ENCODE measurements at regions of chr19 and their contacts with region 1.

Region 1: GRCh38 chr19:43619262-43620060 is at the start of gene ZNF428:
- DNase-seq: peak; percentile 83
- ATAC-seq: peak; percentile 87
- H3K4me3 Mint-ChIP-seq: peak within 1 kb of the TSS; percentile 94
- H3K27ac Mint-ChIP-seq: peak within 1 kb of the TSS; percentile 96
- H3K4me1 Mint-ChIP-seq: peaks cover 21% of the 10 kb centered on the region
- H3K27me3 Mint-ChIP-seq: no peaks in the 10 kb centered on the region
- CTCF ChIP-seq: no peak
- total RNA-seq, gene ZNF428: 26.2 and 29.1 TPM in 2 replicates

Region 2: DNA sequence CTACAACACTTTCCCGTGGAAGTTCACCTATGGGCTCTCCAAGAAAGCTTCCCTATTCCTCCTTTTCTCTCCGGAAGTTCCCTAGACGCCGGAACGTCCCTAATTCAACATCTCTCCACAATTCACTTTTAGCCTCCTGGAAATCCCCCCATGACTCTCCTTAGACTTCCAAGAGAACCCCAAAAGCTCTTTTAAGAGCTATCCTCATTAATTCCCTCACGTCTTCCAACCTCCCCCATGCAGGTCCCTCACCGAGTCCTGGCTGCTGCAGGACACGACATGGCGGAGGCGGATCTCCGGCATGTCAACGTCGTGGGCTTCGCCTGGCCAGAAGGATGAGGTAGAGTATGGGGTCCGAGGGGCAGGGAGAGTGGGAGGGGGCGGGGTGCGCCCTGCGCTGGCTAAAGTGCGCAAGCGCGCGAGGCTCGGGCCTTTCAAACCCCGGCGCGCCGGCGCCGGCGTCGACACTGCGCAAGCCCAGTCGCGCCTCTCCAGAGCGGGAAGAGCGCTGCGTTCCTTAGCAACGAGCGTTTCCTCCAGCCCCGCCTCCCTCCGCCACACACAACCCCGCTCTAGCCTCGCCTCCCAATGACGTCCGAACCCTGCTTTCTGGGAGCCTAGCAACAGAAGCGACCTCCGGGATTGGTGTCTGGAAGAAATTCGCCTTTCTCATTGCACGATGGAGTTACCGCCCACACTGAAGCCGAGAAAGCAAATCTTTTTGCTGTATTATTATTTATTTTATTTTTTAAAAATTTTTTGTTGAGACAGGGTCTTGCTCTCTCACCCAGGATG is 44.1 kb before region 1 on chr19 and contains the starts of genes PINLYP and XRCC1:
- CTCF ChIA-PET with region 1: no interaction called
- POLR2A ChIA-PET with region 1: no interaction called
- intact Hi-C with region 1: loop called (anchors 1 kb)
- DNase-seq: peak; percentile 87
- ATAC-seq: peak; percentile 97
- H3K4me3 Mint-ChIP-seq: peak within 1 kb of the TSS; percentile 96
- H3K27ac Mint-ChIP-seq: peak within 1 kb of the TSS; percentile 92
- H3K4me1 Mint-ChIP-seq: peaks cover 44% of the 10 kb centered on the region
- H3K27me3 Mint-ChIP-seq: no peaks in the 10 kb centered on the region
- CTCF ChIP-seq: no peak
- total RNA-seq, gene PINLYP: 1.9 and 2.1 TPM in 2 replicates
- total RNA-seq, gene XRCC1: 31.9 and 34.5 TPM in 2 replicates

Region 3: GRCh38 chr19:43643326-43643725 is 23.9 kb after region 1 on chr19:
- CTCF ChIA-PET with region 1: no interaction called
- POLR2A ChIA-PET with region 1: no interaction called
- intact Hi-C with region 1: no loop called
- DNase-seq: no peak
- ATAC-seq: no peak
- H3K4me3 Mint-ChIP-seq: no peak overlapping the region
- H3K27ac Mint-ChIP-seq: no peak overlapping the region
- H3K4me1 Mint-ChIP-seq: peaks cover 18% of the 10 kb centered on the region
- H3K27me3 Mint-ChIP-seq: peaks cover 28% of the 10 kb centered on the region
- CTCF ChIP-seq: no peak

Measured in activated B cell treated with CpG ODN at 0.5 μM for 24 hours (primary cell).